WTC11 (cell line): ENCODE measurements at regions of chr4 and their contacts with region 1.

Region 1: GRCh38 chr4:118865091-118865708 is 23.5 kb upstream of the SYNPO2 start:
- DNase-seq: peak; percentile 41
- ATAC-seq: peak; percentile 99
- H3K4me3 Mint-ChIP-seq: no peak overlapping the region
- H3K27ac Mint-ChIP-seq: no peak overlapping the region
- H3K4me1 Mint-ChIP-seq: peaks cover 16% of the 10 kb centered on the region
- H3K27me3 Mint-ChIP-seq: no peaks in the 10 kb centered on the region
- CTCF ChIP-seq: peak; percentile 39; the same call in 1 of the 2 replicates

Region 2: DNA sequence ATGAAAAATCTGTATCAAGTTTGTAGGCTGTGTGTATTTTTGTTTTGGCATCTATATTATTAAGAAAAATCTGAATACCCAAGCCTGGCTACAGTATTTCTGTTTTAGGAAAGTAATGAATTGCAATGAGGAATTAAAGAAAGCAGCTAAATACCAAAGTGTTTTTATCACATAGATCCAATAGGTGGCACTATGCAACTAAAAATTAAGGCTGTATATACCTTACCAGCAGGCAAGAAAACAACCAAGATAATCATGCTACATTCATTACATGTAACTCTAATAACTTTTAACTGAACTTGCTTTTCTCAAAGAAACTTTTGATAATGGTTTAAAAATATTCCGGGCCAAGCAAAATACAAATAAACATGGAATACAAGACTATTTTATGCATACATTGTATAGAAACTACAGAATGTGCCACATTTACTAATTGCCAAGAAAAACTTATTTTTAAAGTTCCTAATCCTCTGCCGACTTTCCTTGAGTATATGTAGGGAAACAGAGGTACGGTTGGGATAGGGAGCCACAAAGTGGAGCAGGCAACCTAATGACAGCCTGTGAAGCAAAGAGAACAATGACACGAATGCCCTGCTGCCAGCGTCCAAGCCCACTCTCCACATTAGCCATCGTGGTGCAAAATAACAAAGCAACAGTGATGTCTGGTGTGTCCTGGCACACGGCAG is 93.0 kb before region 1 on chr4:
- CTCF ChIA-PET with region 1: interaction called, 10 read pairs
- POLR2A ChIA-PET with region 1: no interaction called
- DNase-seq: no peak
- ATAC-seq: peak; percentile 64
- H3K4me3 Mint-ChIP-seq: no peak overlapping the region
- H3K27ac Mint-ChIP-seq: no peak overlapping the region
- H3K4me1 Mint-ChIP-seq: peaks cover 25% of the 10 kb centered on the region
- H3K27me3 Mint-ChIP-seq: no peaks in the 10 kb centered on the region
- CTCF ChIP-seq: no peak; the same call in 1 of the 2 replicates

Region 3: DNA sequence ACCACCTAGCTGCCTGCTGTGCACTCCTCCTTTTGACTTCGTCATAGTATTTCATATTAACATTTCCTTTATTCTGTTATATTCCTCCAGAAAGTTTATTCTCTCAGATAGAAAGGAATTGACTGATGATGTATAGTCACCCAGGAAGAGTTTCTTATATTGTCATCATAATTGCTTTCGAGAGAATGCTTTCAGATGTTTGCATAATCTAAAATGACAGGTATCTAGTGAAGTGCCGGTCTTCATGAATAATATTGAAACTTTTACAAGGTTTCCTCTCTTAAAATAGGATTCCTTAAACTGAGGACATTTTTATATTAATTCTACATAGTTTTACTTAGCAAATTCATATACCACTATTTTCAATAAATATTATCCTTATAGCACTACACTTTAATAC is 39.4 kb before region 1 on chr4:
- CTCF ChIA-PET with region 1: interaction called, 16 read pairs
- POLR2A ChIA-PET with region 1: no interaction called
- DNase-seq: no peak
- ATAC-seq: no peak
- H3K4me3 Mint-ChIP-seq: no peak overlapping the region
- H3K27ac Mint-ChIP-seq: peak overlapping the region; percentile 53
- H3K4me1 Mint-ChIP-seq: peaks cover 31% of the 10 kb centered on the region
- H3K27me3 Mint-ChIP-seq: no peaks in the 10 kb centered on the region
- CTCF ChIP-seq: no peak

Region 4: GRCh38 chr4:118835571-118836300 is 29.5 kb before region 1 on chr4 and contains the start of gene SEC24D:
- CTCF ChIA-PET with region 1: interaction called, 18 read pairs
- POLR2A ChIA-PET with region 1: no interaction called
- DNase-seq: peak; percentile 91
- ATAC-seq: peak; percentile 85
- H3K4me3 Mint-ChIP-seq: peak within 1 kb of the TSS; percentile 96
- H3K27ac Mint-ChIP-seq: peak within 1 kb of the TSS; percentile 100
- H3K4me1 Mint-ChIP-seq: peaks cover 25% of the 10 kb centered on the region
- H3K27me3 Mint-ChIP-seq: no peaks in the 10 kb centered on the region
- CTCF ChIP-seq: no peak
- total RNA-seq, gene SEC24D: 44.2 to 63.1 TPM (median 50.6 TPM) in 3 replicates

Region 5: DNA sequence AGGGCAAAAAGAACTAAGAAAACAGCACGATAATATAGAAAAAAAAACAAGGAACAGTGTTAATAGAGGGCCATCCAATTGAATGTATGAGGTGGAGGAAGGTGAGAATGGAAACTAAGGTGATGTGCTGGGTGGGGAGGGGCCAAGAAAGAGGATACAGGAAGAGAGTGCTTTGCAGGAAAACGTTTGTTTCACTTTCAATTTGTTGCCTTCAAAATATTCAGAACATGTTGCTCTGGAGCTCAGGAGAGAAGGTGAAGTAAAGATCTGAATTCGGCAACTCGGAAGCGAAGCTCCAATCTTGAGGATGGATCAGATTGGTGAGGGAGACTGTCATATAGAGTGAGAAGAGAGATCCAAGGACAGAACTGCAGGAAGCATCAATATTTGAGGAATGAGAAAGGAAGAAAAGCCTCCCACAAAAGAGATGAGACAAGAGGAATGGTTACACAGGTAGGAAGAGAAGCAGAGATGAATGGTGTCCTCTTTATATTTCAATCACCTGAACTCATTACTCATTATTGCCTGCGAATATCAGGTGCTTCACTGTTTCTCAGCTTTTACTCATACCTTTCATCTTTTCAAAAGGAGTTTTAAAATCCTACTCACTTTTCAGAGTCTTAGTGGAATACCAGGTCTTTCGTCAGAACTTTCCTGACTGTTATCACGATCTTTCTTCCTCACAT is 14.6 kb before region 1 on chr4:
- CTCF ChIA-PET with region 1: interaction called, 18 read pairs
- POLR2A ChIA-PET with region 1: no interaction called
- DNase-seq: no peak
- ATAC-seq: peak; percentile 82
- H3K4me3 Mint-ChIP-seq: peak overlapping the region; percentile 86
- H3K27ac Mint-ChIP-seq: peak overlapping the region; percentile 98
- H3K4me1 Mint-ChIP-seq: peaks cover 60% of the 10 kb centered on the region
- H3K27me3 Mint-ChIP-seq: no peaks in the 10 kb centered on the region
- CTCF ChIP-seq: no peak

Region 6: GRCh38 chr4:118941149-118941548 is 75.9 kb after region 1 on chr4:
- CTCF ChIA-PET with region 1: no interaction called
- POLR2A ChIA-PET with region 1: no interaction called
- DNase-seq: no peak
- ATAC-seq: no peak
- H3K4me3 Mint-ChIP-seq: no peak overlapping the region
- H3K27ac Mint-ChIP-seq: no peak overlapping the region
- H3K4me1 Mint-ChIP-seq: peaks cover 12% of the 10 kb centered on the region
- H3K27me3 Mint-ChIP-seq: no peaks in the 10 kb centered on the region
- CTCF ChIP-seq: no peak